ENCODE measurements at regions of chr6 and their contacts with region 1.

Region 1: GRCh38 chr6:10534419-10534762 is 13.2 kb downstream of the GCNT2 start:
- DNase-seq: peak; percentile 77
- ATAC-seq: peak; percentile 65
- H3K4me3 ChIP-seq: peak overlapping the region in 2 of 5 experiments; percentile 9 to 63
- H3K4me3 Mint-ChIP-seq: peak overlapping the region; percentile 74
- H3K27ac ChIP-seq: peak overlapping the region; percentile 56 to 86
- H3K27ac Mint-ChIP-seq: peak overlapping the region; percentile 95
- H3K4me1 ChIP-seq: peaks cover 67 to 76% of the 10 kb centered on the region in 2 donors
- H3K4me1 Mint-ChIP-seq: peaks cover 80% of the 10 kb centered on the region
- H3K27me3 ChIP-seq: no peaks in the 10 kb centered on the region
- H3K27me3 Mint-ChIP-seq: no peaks in the 10 kb centered on the region
- CTCF ChIP-seq: no peak

Region 2: GRCh38 chr6:10722820-10723566 is 188.6 kb after region 1 on chr6 and contains the start of gene TMEM14C:
- CTCF ChIA-PET with region 1: interaction called, 3 read pairs
- POLR2A ChIA-PET with region 1: interaction called, 4 read pairs
- intact Hi-C with region 1: loop called (anchors 1 kb)
- DNase-seq: peak; percentile 82
- ATAC-seq: peak; percentile 99
- H3K4me3 ChIP-seq: peak within 1 kb of the TSS; percentile 52 to 82 (median 70)
- H3K4me3 Mint-ChIP-seq: peak within 1 kb of the TSS; percentile 98
- H3K27ac ChIP-seq: peak within 1 kb of the TSS; percentile 1 to 67
- H3K27ac Mint-ChIP-seq: peak within 1 kb of the TSS; percentile 95
- H3K4me1 ChIP-seq: peaks cover 16 to 31% of the 10 kb centered on the region in 2 donors
- H3K4me1 Mint-ChIP-seq: peaks cover 42% of the 10 kb centered on the region
- H3K27me3 ChIP-seq: no peaks in the 10 kb centered on the region
- H3K27me3 Mint-ChIP-seq: no peaks in the 10 kb centered on the region
- CTCF ChIP-seq: no peak
- total RNA-seq, gene TMEM14C: 25.0 and 31.7 TPM in 2 replicates

Region 3: GRCh38 chr6:10886691-10887535 is 352.5 kb after region 1 on chr6 and contains the start of gene SYCP2L:
- CTCF ChIA-PET with region 1: interaction called, 5 read pairs
- POLR2A ChIA-PET with region 1: no interaction called
- intact Hi-C with region 1: loop called (anchors 5 kb)
- DNase-seq: peak; percentile 76
- ATAC-seq: no peak
- H3K4me3 ChIP-seq: peak within 1 kb of the TSS in 4 of 5 experiments; percentile 25 to 53 (median 38)
- H3K4me3 Mint-ChIP-seq: peak within 1 kb of the TSS; percentile 79
- H3K27ac ChIP-seq: no peak within 1 kb of the TSS
- H3K27ac Mint-ChIP-seq: peak within 1 kb of the TSS; percentile 16
- H3K4me1 ChIP-seq: peaks cover 44 to 46% of the 10 kb centered on the region in 2 donors
- H3K4me1 Mint-ChIP-seq: peaks cover 35% of the 10 kb centered on the region
- H3K27me3 ChIP-seq: peaks cover 0 to 58% (median 53%) of the 10 kb centered on the region in 4 experiments
- H3K27me3 Mint-ChIP-seq: peaks cover 53% of the 10 kb centered on the region
- CTCF ChIP-seq: peak; percentile 26
- total RNA-seq, gene SYCP2L: not detected in 2 replicates

Region 4: DNA sequence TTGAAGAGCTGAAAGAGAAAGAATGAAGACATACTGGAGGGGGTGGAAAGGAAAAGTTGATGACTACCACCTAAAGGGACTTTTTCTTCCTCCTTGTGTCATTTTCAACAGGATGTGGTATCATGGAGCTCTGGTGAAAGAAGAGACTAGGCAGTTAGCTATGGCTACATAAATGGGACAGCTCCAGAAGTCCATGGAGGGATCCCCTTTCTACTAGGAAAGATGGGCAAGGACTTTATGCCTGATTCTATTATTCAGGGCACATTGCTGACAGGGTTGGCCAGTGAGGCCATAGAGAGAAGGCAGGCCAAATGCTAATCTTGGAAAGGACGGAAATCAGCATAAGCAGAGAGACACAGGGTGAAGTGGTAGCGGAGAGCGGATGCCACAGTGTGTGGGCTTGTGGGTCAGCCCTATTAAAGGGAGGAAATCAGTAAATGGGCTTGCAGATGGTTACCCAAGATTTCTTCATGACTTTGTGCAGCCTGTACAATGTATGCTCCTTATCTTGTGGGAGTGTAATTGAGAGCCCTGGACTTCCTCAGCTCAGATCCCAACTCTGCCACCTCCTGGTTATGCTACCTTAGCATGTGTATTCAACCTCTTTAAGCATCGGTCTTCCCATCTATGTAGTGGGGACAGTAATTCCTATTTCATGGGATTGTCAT is 925.7 kb after region 1 on chr6:
- CTCF ChIA-PET with region 1: no interaction called
- POLR2A ChIA-PET with region 1: no interaction called
- intact Hi-C with region 1: loop called (anchors 10 kb)
- DNase-seq: peak; percentile 51
- ATAC-seq: peak; percentile 19
- H3K4me3 ChIP-seq: peak overlapping the region; percentile 7 to 58 (median 19)
- H3K4me3 Mint-ChIP-seq: peak overlapping the region; percentile 87
- H3K27ac ChIP-seq: peak overlapping the region; percentile 88 to 96
- H3K27ac Mint-ChIP-seq: peak overlapping the region; percentile 95
- H3K4me1 ChIP-seq: peaks cover 51 to 55% of the 10 kb centered on the region in 2 donors
- H3K4me1 Mint-ChIP-seq: peaks cover 70% of the 10 kb centered on the region
- H3K27me3 ChIP-seq: no peaks in the 10 kb centered on the region
- H3K27me3 Mint-ChIP-seq: no peaks in the 10 kb centered on the region
- CTCF ChIP-seq: no peak

Measured in B cell (primary cell).